OCI-LY7 (cell line): ENCODE measurements at regions of chr22 and their contacts with region 1.

Region 1: DNA sequence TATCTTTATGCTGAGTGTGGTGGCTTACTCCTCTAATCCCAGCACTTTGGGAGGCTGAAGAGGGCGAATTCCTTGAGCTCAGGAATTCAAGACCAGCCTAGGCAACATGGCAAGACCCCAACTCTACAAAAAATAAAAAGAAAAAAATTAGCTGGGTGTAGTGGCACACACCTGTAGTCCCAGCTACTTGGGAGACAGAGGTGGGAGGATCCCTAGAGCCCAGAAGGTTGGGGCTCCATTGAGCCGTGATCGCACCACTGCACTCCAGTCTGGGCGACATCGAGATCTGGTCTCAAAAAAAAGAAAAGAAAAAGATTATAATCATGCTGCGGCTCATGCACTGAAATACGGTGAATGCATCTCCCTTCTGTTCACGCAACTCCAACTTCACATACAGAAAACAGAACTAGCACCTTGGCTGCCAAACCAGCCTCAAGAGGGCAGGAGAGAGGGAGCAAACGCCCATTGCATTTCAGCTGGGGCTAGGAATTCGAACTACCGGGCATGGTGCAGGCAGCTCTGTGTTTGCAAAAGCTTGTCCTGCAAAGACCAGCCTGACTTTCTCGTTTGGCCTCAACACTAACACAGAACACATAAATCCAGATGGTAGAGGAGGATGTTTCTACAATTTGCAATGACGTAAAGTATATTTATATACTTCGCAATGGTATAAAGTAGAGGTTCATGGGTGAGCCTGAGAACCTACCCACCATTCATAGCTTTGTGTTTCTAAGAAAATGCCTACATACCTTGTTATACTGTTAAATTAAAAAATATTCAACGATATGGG is 6.3 kb upstream of the SYNGR1 start:
- DNase-seq: peak; percentile 69
- H3K4me3 ChIP-seq: no peak overlapping the region
- H3K27ac ChIP-seq: no peak overlapping the region
- H3K4me1 ChIP-seq: peaks cover 5% of the 10 kb centered on the region
- CTCF ChIP-seq: peak; percentile 92

Region 2: DNA sequence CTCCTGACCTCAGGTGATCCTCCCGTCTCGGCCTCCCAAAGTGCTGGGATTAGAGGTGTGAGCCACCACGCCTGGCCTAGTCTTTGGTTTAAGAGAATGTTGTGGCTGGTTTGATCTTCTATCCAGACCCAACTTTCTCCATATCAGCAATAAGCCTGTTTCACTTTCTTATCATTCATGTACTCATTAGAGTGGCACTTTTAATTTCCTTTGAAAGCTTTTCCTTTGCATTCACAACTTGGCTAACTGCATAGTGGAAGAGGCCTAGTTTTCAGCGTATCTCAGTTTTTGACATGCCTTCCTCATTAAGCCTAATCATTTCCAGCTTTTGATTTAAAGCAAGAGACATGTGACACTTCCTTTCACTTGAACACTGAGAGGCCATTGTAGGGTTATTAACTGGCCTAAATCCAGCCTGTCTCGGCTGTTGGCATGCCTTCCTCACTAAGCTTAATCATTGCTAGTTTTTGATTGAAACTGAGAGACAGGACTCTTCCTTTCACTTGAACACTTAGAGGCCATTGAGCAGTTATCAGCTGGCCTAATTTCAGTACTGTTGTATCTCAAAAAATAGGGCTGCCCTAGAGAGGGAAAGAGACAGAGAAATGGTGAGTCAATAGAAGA is 10.9 kb before region 1 on chr22:
- CTCF ChIA-PET with region 1: no interaction called
- POLR2A ChIA-PET with region 1: interaction called, 12 read pairs
- intact Hi-C with region 1: no loop called
- DNase-seq: no peak
- H3K4me3 ChIP-seq: no peak overlapping the region
- H3K27ac ChIP-seq: no peak overlapping the region
- H3K4me1 ChIP-seq: no peaks in the 10 kb centered on the region
- CTCF ChIP-seq: no peak

Region 3: GRCh38 chr22:39388261-39389011 is 45.0 kb after region 1 on chr22:
- CTCF ChIA-PET with region 1: no interaction called
- POLR2A ChIA-PET with region 1: no interaction called
- intact Hi-C with region 1: no loop called
- DNase-seq: no peak
- H3K4me3 ChIP-seq: no peak overlapping the region
- H3K27ac ChIP-seq: no peak overlapping the region
- H3K4me1 ChIP-seq: no peaks in the 10 kb centered on the region
- CTCF ChIP-seq: no peak

Region 4: DNA sequence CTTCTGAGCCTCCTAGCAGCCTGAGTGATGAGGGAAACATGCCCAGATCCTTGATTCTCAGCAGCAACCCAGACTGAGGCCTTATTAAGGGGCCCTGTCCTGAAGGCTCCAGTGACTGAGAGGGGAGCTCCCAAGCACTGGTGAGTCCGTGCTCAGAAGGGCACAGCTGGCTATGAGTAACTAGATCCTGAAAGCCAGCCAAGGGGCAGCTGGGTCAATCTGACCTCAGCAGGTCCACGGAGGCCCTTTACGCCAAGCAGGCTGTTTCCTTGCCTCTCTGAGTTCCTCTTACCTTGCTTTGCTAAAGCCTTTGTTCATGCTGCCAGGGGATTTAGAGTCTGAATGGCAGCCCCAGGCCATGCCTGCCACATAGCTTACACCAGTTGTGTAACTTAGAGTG is 139.3 kb after region 1 on chr22:
- CTCF ChIA-PET with region 1: no interaction called
- POLR2A ChIA-PET with region 1: no interaction called
- intact Hi-C with region 1: no loop called
- DNase-seq: no peak
- H3K4me3 ChIP-seq: no peak overlapping the region
- H3K27ac ChIP-seq: no peak overlapping the region
- H3K4me1 ChIP-seq: no peaks in the 10 kb centered on the region
- CTCF ChIP-seq: no peak

Region 5: DNA sequence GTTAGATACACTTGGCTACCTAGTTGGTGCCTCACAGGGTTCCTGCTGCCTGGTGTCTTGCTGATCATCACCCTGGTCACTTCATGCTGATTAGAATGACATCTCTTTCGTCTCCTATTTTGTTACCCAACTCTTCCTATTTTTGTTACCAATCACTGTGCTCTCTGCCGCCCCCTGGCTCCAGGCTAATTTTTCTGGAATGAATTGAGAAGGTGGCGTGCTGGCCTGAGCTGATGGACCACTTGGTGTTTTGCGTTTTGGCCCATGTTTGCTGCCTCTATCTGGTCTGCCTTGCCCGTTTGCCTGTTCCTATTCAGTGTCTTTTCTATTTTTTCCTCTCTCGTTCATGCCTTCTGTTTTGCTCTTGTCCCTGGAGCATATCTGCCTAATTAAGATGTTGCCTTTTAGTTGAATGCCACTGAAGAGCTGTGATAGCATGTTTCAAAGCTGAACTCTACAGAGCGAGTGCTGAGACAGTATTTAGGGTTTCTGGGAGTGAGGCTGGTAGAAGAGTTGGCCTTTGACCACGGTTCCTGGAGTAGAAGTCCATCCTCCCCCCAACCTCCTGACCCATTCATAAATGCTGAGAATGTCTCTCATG is 171.0 kb after region 1 on chr22:
- CTCF ChIA-PET with region 1: no interaction called
- POLR2A ChIA-PET with region 1: no interaction called
- intact Hi-C with region 1: loop called (anchors 5 kb)
- DNase-seq: peak; percentile 40
- H3K4me3 ChIP-seq: no peak overlapping the region
- H3K27ac ChIP-seq: no peak overlapping the region
- H3K4me1 ChIP-seq: peaks cover 39% of the 10 kb centered on the region
- CTCF ChIP-seq: peak; percentile 91